HAP-1 (cell line): ENCODE measurements at regions of chr4 and their contacts with region 1.

Region 1: GRCh38 chr4:166594326-166594946 is 639.9 kb downstream of the SPOCK3 start:
- DNase-seq: peak; percentile 58 to 68
- H3K4me3 ChIP-seq: no peak overlapping the region
- H3K4me1 ChIP-seq: peaks cover 5% of the 10 kb centered on the region
- H3K27me3 ChIP-seq: no peaks in the 10 kb centered on the region

Region 2: DNA sequence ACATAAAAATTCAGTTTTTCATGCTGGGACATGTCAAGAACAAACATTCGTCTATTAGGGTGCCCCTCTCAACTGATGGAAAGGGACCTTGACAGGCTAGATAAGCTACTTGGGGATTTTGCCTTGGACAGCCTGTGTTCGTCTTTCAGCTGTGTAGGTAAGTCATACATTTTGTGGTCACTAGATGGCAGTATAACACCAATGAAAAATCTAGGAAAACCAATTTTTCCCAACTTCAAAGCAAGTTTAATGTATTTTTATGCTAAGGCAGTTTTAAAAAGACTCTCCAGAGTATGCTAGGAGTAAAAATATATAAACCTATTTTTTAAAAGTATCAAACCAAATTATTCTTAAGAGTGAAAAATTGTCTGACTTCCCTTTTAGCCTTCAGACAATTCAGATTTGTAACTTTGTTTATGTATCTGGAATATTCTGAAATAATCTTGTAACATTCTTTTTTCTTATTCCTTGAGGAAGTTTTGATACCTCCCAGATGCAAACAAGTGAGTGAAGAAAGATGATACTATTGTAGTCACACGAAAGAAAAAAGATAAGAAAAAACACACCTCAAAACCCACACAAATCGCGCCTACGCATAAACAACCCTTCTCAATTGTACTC is 1057.3 kb before region 1 on chr4:
- in situ Hi-C with region 1: loop called (anchors 25 kb)
- DNase-seq: peak; percentile 17 to 32
- H3K4me3 ChIP-seq: no peak overlapping the region
- H3K4me1 ChIP-seq: peaks cover 3% of the 10 kb centered on the region; the same call in 1 of the 2 replicates
- H3K27me3 ChIP-seq: no peaks in the 10 kb centered on the region; the same call in 1 of the 2 replicates

Region 3: DNA sequence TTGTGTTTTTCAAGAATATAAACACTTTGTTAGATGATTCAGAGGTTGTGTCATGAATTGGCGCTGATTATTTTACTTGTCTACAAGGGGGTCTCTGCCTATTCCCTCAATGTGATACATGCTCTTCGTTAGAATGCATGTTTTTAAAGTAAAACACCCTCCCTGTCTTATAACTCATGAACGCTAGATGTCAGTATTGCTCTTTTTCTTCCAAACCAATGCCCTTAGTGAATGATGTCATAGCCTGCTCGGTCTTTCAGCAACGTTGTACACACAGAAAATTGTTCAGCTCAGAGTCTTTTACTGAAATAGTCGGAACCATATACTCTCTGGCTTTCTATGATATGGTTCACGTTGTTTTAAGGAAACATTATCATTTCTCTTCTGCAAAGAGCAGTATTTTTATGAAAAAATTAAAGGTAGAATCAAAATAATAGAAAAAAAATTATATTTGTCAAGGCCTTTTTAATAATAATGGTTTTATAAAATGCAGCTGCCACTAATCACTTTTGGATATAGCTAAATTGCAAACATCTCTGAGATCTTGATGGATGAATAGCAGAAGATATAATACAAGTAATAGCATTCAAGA is 428.5 kb before region 1 on chr4:
- in situ Hi-C with region 1: loop called (anchors 10 kb)
- DNase-seq: peak; percentile 52 to 71
- H3K4me3 ChIP-seq: no peak overlapping the region
- H3K4me1 ChIP-seq: no peaks in the 10 kb centered on the region
- H3K27me3 ChIP-seq: no peaks in the 10 kb centered on the region